Uterus (tissue), 4 donors: ENCODE measurements at regions of chr4 and their contacts with region 1.

Region 1: GRCh38 chr4:153573881-153574802 is 108.0 kb downstream of the TMEM131L start:
- DNase-seq: peak; percentile 63 to 69
- H3K4me3 ChIP-seq: no peak overlapping the region
- H3K27ac ChIP-seq: no peak overlapping the region
- H3K4me1 ChIP-seq: no peaks in the 10 kb centered on the region
- H3K27me3 ChIP-seq: no peaks in the 10 kb centered on the region
- CTCF ChIP-seq: peak; percentile 59 to 75 (median 66)
- POLR2A ChIP-seq: no peak

Region 2: GRCh38 chr4:153344131-153345010 is 229.8 kb before region 1 on chr4 and contains the start of gene MND1:
- intact Hi-C with region 1: loop called (anchors 5 kb)
- DNase-seq: peak; percentile 80 to 87
- H3K4me3 ChIP-seq: peak within 1 kb of the TSS; percentile 34 to 67
- H3K27ac ChIP-seq: peak within 1 kb of the TSS in 1 of 2 donors; percentile 34
- H3K4me1 ChIP-seq: no peaks in the 10 kb centered on the region
- H3K27me3 ChIP-seq: no peaks in the 10 kb centered on the region
- CTCF ChIP-seq: peak; percentile 86 to 100 (median 92)
- POLR2A ChIP-seq: no peak
- total RNA-seq, gene MND1: 1.0 to 6.5 TPM in 2 of 4 donors, not detected in the others

Region 3: GRCh38 chr4:153432968-153433753 is 141.0 kb before region 1 on chr4:
- intact Hi-C with region 1: loop called (anchors 10 kb)
- DNase-seq: peak; percentile 49 to 57
- H3K4me3 ChIP-seq: no peak overlapping the region
- H3K27ac ChIP-seq: peak overlapping the region; percentile 30 to 31
- H3K4me1 ChIP-seq: no peaks in the 10 kb centered on the region
- H3K27me3 ChIP-seq: no peaks in the 10 kb centered on the region
- CTCF ChIP-seq: peak; percentile 36 to 52 (median 42)
- POLR2A ChIP-seq: no peak

Region 4: DNA sequence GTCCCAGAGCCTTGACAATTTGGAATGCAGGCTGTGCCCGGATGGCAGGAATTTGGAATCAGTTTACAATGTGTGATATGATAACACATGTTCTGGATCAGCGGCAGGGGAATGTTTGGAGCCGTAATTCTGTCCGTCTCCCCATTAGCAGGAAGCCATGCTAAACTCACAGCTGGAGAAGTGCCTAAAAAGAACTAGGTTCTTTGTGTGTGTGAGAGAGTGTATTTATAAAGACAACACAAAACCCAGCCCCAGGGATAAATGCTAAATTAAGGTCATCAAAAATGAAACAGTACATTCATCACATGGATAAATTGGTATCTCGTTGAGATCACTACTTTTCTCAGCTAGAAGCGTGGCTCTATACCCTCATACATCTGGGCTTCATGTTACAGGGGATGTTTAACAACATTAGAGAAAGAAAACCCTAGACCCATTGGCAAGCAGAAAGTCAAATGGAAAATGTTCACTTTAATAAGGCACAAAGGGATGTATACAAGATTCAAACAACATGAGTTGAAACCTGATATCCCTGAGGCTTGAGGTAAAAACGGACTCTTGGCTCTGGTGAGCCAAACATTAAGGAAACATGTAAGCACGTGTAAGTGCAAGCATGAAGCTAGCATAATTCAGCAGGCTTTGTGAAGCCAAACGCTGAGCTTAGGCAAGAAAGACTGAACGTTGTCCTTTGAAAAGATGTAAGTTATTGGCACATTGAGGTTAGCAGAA is 126.0 kb before region 1 on chr4:
- intact Hi-C with region 1: no loop called
- DNase-seq: no peak
- H3K4me3 ChIP-seq: no peak overlapping the region
- H3K27ac ChIP-seq: peak overlapping the region; percentile 26 to 47
- H3K4me1 ChIP-seq: no peaks in the 10 kb centered on the region
- H3K27me3 ChIP-seq: no peaks in the 10 kb centered on the region
- CTCF ChIP-seq: no peak
- POLR2A ChIP-seq: no peak